GM18951 (cell line): ENCODE measurements at regions of chr12 and their contacts with region 1.

Region 1: GRCh38 chr12:76784600-76785051 is 20.7 kb downstream of the ZDHHC17 start:
- POLR2A ChIP-seq: no peak

Region 2: GRCh38 chr12:76183459-76184186 is 601.0 kb before region 1 on chr12:
- in situ Hi-C with region 1: no loop called
- POLR2A ChIP-seq: no peak

Region 3: DNA sequence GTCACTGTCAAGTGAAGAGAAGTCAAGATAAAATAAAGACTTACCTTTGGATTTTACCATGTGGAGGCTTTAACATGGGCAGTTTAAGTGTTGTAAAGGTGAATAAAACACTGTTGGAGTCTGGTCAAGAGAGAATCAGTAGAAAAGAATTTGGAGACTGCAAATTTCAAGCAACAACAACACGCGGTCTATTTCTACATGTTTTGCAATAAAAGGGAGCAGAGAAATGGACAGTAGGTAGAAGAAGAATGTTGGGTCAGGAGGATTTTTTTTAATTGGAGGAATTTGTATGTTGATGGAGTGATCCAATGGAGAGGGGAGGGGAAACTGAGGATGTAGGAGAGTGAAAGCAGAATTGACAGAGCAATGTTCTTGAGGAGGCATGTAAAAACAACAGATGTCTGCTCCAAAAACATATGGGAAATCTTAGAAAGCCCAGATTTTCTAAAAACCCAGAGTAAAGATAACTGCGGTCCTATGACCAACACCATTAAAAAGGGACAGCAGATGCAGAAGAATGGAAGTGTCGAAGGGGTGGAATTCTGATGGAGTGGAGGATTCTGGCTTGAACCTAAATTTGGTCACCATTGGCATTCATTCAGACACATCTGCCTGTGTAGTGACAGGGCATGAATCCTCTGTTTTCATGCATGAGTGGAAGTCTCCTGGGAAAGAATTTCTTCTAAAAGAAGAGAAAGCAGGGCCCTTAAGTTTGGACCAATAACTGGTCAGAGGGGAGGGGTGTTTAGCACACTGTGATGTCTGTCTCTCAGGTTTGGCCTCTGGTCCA is 157.1 kb before region 1 on chr12:
- in situ Hi-C with region 1: loop called (anchors 5 kb)
- POLR2A ChIP-seq: no peak

Region 4: DNA sequence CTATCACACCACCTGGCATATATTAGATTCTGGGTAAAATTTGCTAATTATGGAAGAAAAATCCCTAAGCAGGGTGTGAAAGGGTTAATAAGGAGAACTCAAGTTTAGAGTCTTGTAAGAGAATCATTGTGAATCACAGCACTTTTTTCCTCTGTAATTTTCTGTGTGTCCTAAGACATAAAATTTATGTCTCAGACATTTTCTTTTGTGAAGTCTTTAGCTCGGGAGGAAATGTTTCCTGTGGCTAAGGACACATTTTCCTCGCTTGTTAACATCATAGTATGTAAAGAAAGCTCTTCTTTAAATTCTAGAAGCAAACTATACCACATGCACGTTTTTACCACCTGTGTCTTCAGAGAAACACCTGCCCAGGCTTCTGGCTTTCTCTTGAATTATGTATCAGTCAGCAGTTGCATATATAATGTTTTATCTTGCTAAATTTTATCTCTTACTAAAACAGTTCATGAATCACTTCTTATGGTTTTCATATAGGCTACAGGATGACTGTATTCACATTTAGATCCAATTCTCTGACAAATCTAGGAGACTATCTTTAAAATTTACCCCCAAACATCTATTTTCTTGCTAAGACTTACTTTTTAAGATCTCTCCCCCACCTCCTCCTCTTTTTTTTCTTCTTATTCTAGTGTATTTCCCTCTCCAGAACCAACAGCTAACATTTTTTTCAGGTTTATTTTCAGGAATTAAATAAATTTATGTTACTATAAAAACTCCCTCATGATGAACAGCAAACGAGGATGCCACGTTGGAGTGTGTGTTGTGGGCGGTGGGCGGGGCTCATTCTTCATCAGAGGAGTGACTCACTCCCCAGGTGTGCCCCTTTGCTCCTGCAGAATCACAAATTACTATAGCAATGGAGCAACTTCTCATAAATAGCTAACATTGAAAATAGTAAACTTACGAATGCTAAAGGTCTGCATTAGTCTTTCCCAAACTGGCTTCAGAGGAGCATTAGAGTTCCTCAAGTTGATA is 105.8 kb after region 1 on chr12:
- in situ Hi-C with region 1: no loop called
- POLR2A ChIP-seq: no peak